SK-N-SH (cell line): ENCODE measurements at regions of chr11 and their contacts with region 1.

Region 1: GRCh38 chr11:131748151-131749050 is 378.0 kb downstream of the NTM start:
- DNase-seq: peak; percentile 67
- H3K4me3 ChIP-seq: peak overlapping the region in 1 of 2 experiments; percentile 28; a peak in 2 of 4 replicates
- H3K27ac ChIP-seq: peak overlapping the region in 1 of 2 experiments; percentile 96; a peak in 2 of 4 replicates
- H3K4me1 ChIP-seq: peaks cover 0 to 39% of the 10 kb centered on the region in 2 experiments; a peak in 3 of 4 replicates
- H3K27me3 ChIP-seq: no peaks in the 10 kb centered on the region
- CTCF ChIP-seq: peak; percentile 94
- EP300 ChIP-seq: 0 out of 4 replicates have a peak, but pooled peaks of 1 of the 2 experiments have one; percentile 5
- RAD21 ChIP-seq: peak; percentile 85

Region 2: DNA sequence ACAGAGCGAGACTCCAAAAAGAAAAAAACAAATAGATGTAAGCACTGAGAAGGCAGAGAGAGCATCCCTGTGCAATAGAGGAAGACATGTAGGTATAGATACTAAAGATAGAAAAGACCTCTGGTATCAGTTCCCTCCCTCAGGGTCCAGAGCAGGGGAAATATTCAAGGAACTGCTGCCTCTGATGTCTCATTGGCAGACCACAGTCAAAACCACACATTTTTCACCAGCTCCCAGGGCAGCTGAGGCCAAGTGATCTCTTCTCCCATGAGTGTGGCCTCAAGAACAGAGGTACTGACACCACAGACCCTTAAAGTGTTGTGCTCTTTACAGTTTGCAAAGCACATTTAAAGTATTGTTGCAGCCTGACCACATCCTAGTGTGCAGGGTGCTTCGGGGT is 89.4 kb before region 1 on chr11:
- CTCF ChIA-PET with region 1: no interaction called
- POLR2A ChIA-PET with region 1: no interaction called
- DNase-seq: no peak
- H3K4me3 ChIP-seq: no peak overlapping the region
- H3K27ac ChIP-seq: no peak overlapping the region
- H3K4me1 ChIP-seq: no peaks in the 10 kb centered on the region
- H3K27me3 ChIP-seq: no peaks in the 10 kb centered on the region
- CTCF ChIP-seq: no peak
- EP300 ChIP-seq: no peak
- RAD21 ChIP-seq: no peak

Region 3: GRCh38 chr11:131710511-131710910 is 37.9 kb before region 1 on chr11:
- CTCF ChIA-PET with region 1: interaction called, 13 read pairs
- POLR2A ChIA-PET with region 1: no interaction called
- DNase-seq: no peak
- H3K4me3 ChIP-seq: no peak overlapping the region
- H3K27ac ChIP-seq: no peak overlapping the region
- H3K4me1 ChIP-seq: no peaks in the 10 kb centered on the region
- H3K27me3 ChIP-seq: no peaks in the 10 kb centered on the region; the same call in 1 of the 2 replicates
- CTCF ChIP-seq: no peak
- EP300 ChIP-seq: no peak
- RAD21 ChIP-seq: no peak

Region 4: DNA sequence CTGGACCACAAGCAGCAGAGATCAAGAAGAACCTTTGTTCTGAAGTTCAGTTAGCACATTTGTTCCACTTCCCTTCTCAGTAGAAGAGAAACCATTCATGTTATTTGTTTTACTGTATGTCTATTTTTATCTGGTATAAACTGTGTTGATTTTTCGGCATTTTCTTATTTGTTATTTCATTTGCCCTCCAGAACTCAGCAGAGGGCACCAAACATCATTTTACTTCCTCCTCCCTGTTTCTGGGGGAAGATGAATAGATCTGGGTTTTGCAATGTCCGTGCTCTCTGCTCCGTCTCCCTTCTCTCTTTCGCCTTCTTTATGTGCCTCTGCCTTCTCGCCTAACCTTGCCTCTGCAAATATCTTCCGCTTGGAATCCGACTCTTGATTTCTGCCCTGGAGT is 11.0 kb before region 1 on chr11:
- CTCF ChIA-PET with region 1: interaction called, 28 read pairs
- POLR2A ChIA-PET with region 1: no interaction called
- DNase-seq: no peak
- H3K4me3 ChIP-seq: no peak overlapping the region
- H3K27ac ChIP-seq: no peak overlapping the region
- H3K4me1 ChIP-seq: no peaks in the 10 kb centered on the region
- H3K27me3 ChIP-seq: peaks cover 6% of the 10 kb centered on the region; the same call in 1 of the 2 replicates
- CTCF ChIP-seq: peak; percentile 24; the same call in 1 of the 2 replicates
- EP300 ChIP-seq: no peak
- RAD21 ChIP-seq: no peak

Region 5: DNA sequence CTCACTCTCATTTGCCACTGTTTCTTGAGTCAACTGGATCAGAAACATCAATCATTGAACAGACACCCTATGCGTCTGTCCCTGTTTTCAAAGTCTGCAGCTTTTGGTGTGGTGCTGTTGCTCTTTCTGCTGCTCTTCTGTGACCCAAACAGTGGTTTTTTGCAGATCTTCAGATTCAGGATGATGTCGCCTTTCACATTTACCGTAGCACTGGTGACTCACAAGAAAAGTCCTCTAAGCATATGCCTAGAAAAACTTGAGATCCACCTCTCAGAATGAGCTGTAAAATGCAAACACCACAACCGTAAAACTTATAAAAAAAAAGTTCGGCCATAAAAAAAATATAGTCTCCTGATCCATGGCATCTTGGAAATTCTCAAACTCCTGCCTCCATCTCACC is 22.4 kb after region 1 on chr11:
- CTCF ChIA-PET with region 1: interaction called, 25 read pairs
- POLR2A ChIA-PET with region 1: no interaction called
- DNase-seq: no peak
- H3K4me3 ChIP-seq: no peak overlapping the region
- H3K27ac ChIP-seq: peak overlapping the region in 1 of 2 experiments; percentile 38; a peak in 1 of 4 replicates
- H3K4me1 ChIP-seq: peaks cover 0 to 16% of the 10 kb centered on the region in 2 experiments; a peak in 1 of 4 replicates
- H3K27me3 ChIP-seq: no peaks in the 10 kb centered on the region
- CTCF ChIP-seq: no peak
- EP300 ChIP-seq: no peak
- RAD21 ChIP-seq: no peak

Region 6: GRCh38 chr11:131867457-131868257 is 119.3 kb after region 1 on chr11:
- CTCF ChIA-PET with region 1: interaction called, 21 read pairs
- POLR2A ChIA-PET with region 1: no interaction called
- DNase-seq: peak; percentile 70
- H3K4me3 ChIP-seq: no peak overlapping the region; a peak in 1 of 4 replicates
- H3K27ac ChIP-seq: no peak overlapping the region
- H3K4me1 ChIP-seq: peaks cover 0 to 11% of the 10 kb centered on the region in 2 experiments; a peak in 2 of 4 replicates
- H3K27me3 ChIP-seq: no peaks in the 10 kb centered on the region
- CTCF ChIP-seq: peak; percentile 94
- EP300 ChIP-seq: no peak
- RAD21 ChIP-seq: peak; percentile 97

Region 7: DNA sequence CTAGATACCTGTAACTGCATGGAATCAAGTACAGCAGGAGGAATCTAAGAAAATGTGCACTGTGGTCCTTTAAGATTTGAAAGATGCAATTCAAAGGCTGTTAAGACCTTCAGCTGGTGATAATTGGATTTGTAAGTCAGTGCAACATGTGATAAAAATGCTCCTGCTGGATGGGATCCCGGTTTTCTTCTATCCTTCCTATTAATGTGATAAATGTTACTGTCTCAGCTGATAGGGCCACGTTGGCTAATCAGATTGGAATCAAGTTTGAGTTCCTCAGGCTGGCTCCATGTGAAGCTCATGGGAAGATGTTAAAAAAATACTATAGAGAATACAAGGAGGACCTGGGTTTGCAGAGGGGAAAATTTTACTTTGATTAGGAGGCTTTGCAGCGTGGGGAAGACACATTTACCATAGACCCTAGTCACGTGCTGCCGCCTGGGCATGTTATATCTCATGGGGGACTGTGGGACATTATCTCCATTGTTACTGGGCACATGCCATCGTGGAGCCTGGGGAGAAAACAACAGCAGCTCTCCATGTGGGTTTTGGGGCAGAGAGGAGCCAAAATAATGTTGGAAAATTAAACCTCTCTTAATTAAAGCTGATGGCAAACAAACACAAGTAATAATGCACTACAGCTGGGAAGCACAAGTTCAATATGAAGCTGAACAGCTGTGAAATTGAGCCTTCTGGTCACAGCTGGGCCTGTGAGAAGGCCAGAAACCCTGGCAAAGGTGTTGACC is 274.5 kb after region 1 on chr11:
- CTCF ChIA-PET with region 1: interaction called, 24 read pairs
- POLR2A ChIA-PET with region 1: no interaction called
- DNase-seq: no peak
- H3K4me3 ChIP-seq: no peak overlapping the region
- H3K27ac ChIP-seq: peak overlapping the region; percentile 53 to 81; a peak in 3 of 4 replicates
- H3K4me1 ChIP-seq: peaks cover 6 to 38% of the 10 kb centered on the region in 2 experiments
- H3K27me3 ChIP-seq: no peaks in the 10 kb centered on the region
- CTCF ChIP-seq: no peak
- EP300 ChIP-seq: peak in 1 of 2 experiments; percentile 78; a peak in 1 of 4 replicates
- RAD21 ChIP-seq: no peak

Region 8: GRCh38 chr11:132126973-132127899 is 378.8 kb after region 1 on chr11:
- CTCF ChIA-PET with region 1: interaction called, 24 read pairs
- POLR2A ChIA-PET with region 1: no interaction called
- DNase-seq: peak; percentile 66
- H3K4me3 ChIP-seq: no peak overlapping the region
- H3K27ac ChIP-seq: peak overlapping the region in 1 of 2 experiments; percentile 69; a peak in 1 of 4 replicates
- H3K4me1 ChIP-seq: peaks cover 0 to 10% of the 10 kb centered on the region in 2 experiments; a peak in 2 of 4 replicates
- H3K27me3 ChIP-seq: no peaks in the 10 kb centered on the region
- CTCF ChIP-seq: peak; percentile 89
- EP300 ChIP-seq: no peak
- RAD21 ChIP-seq: peak; percentile 82